Heart right ventricle (tissue), 16 donors: ENCODE measurements at regions of chr7 and their contacts with region 1.

Region 1: GRCh38 chr7:122935620-122936019 is 49.4 kb upstream of the CADPS2 start:
- DNase-seq: no peak
- ATAC-seq: no peak
- H3K4me3 ChIP-seq: no peak overlapping the region
- H3K27ac ChIP-seq: no peak overlapping the region
- H3K4me1 ChIP-seq: no peaks in the 10 kb centered on the region
- H3K27me3 ChIP-seq: no peaks in the 10 kb centered on the region
- CTCF ChIP-seq: no peak

Region 2: DNA sequence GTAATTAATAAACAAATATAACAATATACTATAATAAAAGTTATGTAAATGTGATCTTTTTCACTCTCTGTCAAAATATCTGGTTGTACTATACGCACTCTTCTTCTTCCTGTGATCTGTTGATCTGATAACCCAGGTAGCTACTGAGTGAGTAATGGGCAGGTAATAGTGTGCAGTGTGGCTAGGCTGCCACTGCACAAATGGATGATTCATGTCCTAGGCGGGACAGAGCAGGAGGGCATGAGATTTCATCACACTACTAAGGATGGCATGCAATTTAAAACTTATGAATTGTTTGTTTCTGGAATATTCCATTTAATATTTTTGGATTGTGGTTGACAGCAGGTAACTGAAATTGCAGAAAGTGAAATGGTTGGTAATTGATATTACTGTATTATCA is 15.4 kb after region 1 on chr7:
- intact Hi-C with region 1: loop called in 1 of 10 experiments (anchors 2 kb)
- DNase-seq: no peak
- ATAC-seq: no peak
- H3K4me3 ChIP-seq: no peak overlapping the region
- H3K27ac ChIP-seq: no peak overlapping the region
- H3K4me1 ChIP-seq: no peaks in the 10 kb centered on the region
- H3K27me3 ChIP-seq: peaks cover 0 to 4% (median 0%) of the 10 kb centered on the region in 7 donors
- CTCF ChIP-seq: no peak